SK-N-SH (cell line): ENCODE measurements at regions of chr11 and their contacts with region 1.

Region 1: DNA sequence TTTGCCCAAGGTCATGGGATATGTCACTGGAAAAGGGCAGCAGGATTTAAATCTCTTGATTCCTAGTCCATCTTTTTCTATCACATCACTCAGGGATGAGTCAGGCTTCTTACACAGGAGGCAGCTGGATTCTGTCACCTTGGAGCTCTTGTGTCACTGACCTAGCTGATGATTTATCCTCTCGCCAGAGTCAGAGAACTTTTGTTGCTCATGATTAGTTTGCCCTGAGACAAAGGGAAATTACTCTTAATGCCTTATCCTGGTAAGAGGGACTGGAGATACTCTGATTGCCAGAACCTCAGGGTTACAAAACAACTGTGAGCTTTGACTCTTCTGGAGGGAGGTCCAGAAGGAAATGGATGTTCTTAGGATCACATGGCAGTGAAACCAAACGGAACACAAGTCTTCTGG is 10.1 kb downstream of the COA4 start:
- DNase-seq: peak; percentile 58
- H3K4me3 ChIP-seq: no peak overlapping the region
- H3K27ac ChIP-seq: peak overlapping the region; percentile 93 to 97
- H3K4me1 ChIP-seq: peaks cover 12 to 13% of the 10 kb centered on the region in 2 experiments
- H3K27me3 ChIP-seq: no peaks in the 10 kb centered on the region
- CTCF ChIP-seq: no peak
- EP300 ChIP-seq: peak; percentile 66 to 84; a peak in 3 of 4 replicates
- RAD21 ChIP-seq: no peak

Region 2: DNA sequence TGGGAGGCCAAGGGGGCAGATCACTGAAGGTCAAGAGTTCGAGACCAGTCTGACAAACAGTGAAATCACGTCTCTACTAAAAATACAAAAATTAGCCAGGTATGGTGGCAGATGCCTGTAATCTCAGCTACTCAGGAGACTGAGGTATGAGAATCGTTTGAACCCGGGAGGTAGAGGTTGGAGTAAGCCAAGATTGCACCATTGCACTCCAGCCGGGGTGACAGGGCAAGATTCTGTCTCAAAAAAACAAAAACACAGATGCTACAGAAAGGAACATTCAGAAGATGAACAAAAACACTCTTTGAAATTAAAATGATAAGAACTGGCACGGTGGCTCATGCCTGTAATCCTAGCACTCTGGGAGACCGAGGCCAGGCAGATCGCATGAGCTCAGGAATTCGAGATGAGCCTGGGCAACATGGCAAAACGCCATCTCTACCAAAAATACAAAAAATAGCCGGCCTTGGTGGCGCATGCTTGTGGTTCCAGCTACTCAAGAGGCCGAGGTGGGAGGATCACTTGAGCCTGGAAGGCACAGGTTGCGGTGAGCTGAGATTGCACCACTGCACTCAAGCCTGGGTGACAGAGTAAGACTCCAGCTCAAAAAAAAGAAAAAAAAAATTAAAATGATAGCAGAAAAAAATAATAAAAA is 114.2 kb before region 1 on chr11:
- CTCF ChIA-PET with region 1: no interaction called
- POLR2A ChIA-PET with region 1: no interaction called
- DNase-seq: no peak
- H3K4me3 ChIP-seq: no peak overlapping the region
- H3K27ac ChIP-seq: no peak overlapping the region
- H3K4me1 ChIP-seq: no peaks in the 10 kb centered on the region
- H3K27me3 ChIP-seq: no peaks in the 10 kb centered on the region
- CTCF ChIP-seq: no peak
- EP300 ChIP-seq: no peak
- RAD21 ChIP-seq: no peak

Region 3: GRCh38 chr11:73779084-73779902 is 87.3 kb before region 1 on chr11:
- CTCF ChIA-PET with region 1: no interaction called
- POLR2A ChIA-PET with region 1: interaction called, 14 read pairs
- DNase-seq: peak; percentile 96
- H3K4me3 ChIP-seq: peak overlapping the region; percentile 53 to 64
- H3K27ac ChIP-seq: peak overlapping the region; percentile 86 to 94
- H3K4me1 ChIP-seq: no peaks in the 10 kb centered on the region
- H3K27me3 ChIP-seq: no peaks in the 10 kb centered on the region
- CTCF ChIP-seq: no peak
- EP300 ChIP-seq: peak in 1 of 2 experiments; percentile 40; a peak in 1 of 4 replicates
- RAD21 ChIP-seq: peak; percentile 32; the same call in 1 of the 2 replicates

Region 4: DNA sequence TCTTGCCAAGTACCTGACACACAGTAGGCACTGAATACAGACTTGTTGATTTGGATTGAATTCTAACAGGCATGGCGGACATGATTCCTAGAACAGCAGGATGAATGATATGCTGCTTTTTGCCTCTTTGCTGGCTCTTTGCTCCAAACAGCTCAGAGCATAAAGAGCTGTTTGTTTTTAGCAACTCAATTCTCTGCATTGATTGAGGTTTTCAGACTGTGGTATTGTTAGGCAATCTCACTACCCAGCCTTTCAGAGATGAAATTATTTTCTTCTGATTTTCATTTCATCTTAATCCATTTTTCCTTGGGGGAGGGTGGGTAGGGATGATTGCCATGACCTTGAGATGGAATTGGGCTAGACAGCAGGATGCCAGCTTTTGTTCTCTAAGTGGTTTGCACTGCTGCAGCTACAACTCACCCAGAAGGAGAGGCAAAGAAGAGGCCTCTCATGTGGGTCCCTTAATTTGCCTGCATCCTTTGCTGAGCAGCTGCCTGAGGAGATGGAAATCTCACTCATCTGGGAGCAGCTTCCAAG is 10.5 kb before region 1 on chr11:
- CTCF ChIA-PET with region 1: interaction called, 11 read pairs
- POLR2A ChIA-PET with region 1: interaction called, 7 read pairs
- DNase-seq: peak; percentile 17
- H3K4me3 ChIP-seq: no peak overlapping the region
- H3K27ac ChIP-seq: no peak overlapping the region
- H3K4me1 ChIP-seq: peaks cover 0 to 2% of the 10 kb centered on the region in 2 experiments; a peak in 2 of 4 replicates
- H3K27me3 ChIP-seq: no peaks in the 10 kb centered on the region
- CTCF ChIP-seq: no peak
- EP300 ChIP-seq: no peak
- RAD21 ChIP-seq: no peak